ENCODE measurements at regions of chr9 and their contacts with region 1.

Region 1: GRCh38 chr9:38362852-38363593 is 29.5 kb upstream of the ALDH1B1 start:
- DNase-seq: peak; percentile 35 to 66
- H3K4me3 ChIP-seq: peak overlapping the region; percentile 10 to 21
- H3K27ac ChIP-seq: peak overlapping the region; percentile 41 to 55
- H3K4me1 ChIP-seq: peaks cover 0 to 9% (median 3%) of the 10 kb centered on the region in 4 donors
- H3K27me3 ChIP-seq: no peaks in the 10 kb centered on the region
- CTCF ChIP-seq: peak; percentile 59 to 60

Region 2: DNA sequence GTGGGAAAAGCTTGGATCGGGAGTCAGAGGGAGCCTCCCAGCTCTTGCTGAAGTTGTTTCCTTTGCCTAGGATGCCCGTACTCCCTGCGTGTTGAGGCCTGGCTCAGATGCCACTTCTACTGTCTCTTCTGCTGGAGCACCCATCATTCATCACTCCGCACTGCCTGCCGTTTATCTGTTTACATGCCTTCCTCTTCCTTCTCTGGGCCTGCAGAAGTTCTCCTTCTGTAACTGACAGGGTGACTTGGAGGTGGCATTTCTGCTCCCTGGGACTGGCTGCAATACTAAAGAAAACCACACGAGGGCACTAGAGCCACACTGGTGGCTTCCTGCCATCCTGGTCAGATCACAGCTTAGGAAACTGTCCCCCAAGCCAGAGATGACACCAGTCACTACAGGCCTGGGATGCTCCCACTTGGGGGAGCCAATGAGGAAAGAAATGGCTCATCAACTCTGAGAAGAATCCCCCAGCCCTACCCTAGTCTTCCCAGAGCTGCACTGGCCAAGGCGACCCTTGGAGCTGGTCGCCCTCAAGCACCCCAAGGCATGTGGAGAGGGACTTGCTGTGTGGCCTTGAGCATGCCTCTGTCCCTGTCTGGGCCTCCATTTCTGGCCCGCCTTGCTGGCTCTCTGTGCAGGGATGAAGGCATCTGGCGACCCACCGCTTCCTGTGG is 449.4 kb before region 1 on chr9:
- intact Hi-C with region 1: loop called (anchors 2 kb)
- DNase-seq: peak; percentile 75 to 88
- H3K4me3 ChIP-seq: no peak overlapping the region
- H3K27ac ChIP-seq: no peak overlapping the region
- H3K4me1 ChIP-seq: no peaks in the 10 kb centered on the region
- H3K27me3 ChIP-seq: no peaks in the 10 kb centered on the region
- CTCF ChIP-seq: peak; percentile 95 to 98

Region 3: DNA sequence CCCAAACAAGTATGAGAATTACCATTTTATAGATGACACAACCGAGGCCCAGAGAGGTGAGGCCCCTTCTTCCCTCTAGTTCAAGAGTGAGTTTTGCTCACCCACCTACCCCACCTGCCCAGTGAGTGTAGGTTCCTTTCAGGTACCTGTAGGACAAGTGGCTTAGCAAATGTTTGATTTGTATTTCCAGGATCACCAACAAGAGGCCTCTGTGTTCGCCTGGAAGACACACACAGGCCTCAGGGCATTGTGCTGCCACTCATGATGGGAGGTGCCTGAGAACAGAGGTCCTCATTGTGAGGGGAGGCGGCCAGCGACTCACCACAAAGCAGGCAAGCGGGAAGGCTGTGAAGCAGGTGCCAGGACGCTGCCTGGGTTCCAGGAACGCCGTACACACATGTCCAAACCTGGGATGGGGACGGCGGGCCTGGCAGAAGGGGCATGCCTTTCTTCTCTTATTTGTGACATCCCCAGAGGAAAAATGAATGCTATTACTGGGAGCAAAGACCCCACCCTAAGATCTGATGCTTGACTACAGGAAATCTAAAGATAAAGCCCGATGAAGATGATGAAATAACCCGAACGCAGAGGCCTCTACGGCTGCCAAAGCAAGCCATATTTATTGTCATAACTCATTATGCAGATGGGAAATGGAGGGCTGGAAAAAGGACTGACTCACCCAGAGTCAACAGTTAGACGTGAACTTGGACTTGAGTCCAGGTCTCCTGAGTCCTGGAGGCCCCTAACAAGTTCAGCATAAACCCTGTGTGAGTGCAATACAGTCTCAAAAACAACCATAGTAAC is 398.9 kb before region 1 on chr9:
- intact Hi-C with region 1: no loop called
- DNase-seq: peak; percentile 58 to 78
- H3K4me3 ChIP-seq: no peak overlapping the region
- H3K27ac ChIP-seq: peak overlapping the region; percentile 65 to 71
- H3K4me1 ChIP-seq: peaks cover 4 to 55% (median 30%) of the 10 kb centered on the region in 4 donors
- H3K27me3 ChIP-seq: no peaks in the 10 kb centered on the region
- CTCF ChIP-seq: no peak

Region 4: GRCh38 chr9:38017149-38017884 is 345.7 kb before region 1 on chr9:
- intact Hi-C with region 1: loop called (anchors 10 kb)
- DNase-seq: peak; percentile 39 to 83
- H3K4me3 ChIP-seq: peak overlapping the region in 1 of 2 donors; percentile 27
- H3K27ac ChIP-seq: peak overlapping the region; percentile 34 to 37
- H3K4me1 ChIP-seq: peaks cover 0 to 54% (median 45%) of the 10 kb centered on the region in 4 donors
- H3K27me3 ChIP-seq: no peaks in the 10 kb centered on the region
- CTCF ChIP-seq: peak; percentile 69 to 78

Region 5: GRCh38 chr9:38088006-38088925 is 274.8 kb before region 1 on chr9:
- intact Hi-C with region 1: loop called (anchors 5 kb)
- DNase-seq: peak; percentile 70 to 86
- H3K4me3 ChIP-seq: no peak overlapping the region
- H3K27ac ChIP-seq: no peak overlapping the region
- H3K4me1 ChIP-seq: peaks cover 0 to 8% (median 2%) of the 10 kb centered on the region in 4 donors
- H3K27me3 ChIP-seq: no peaks in the 10 kb centered on the region
- CTCF ChIP-seq: peak; percentile 89 to 96

Region 6: DNA sequence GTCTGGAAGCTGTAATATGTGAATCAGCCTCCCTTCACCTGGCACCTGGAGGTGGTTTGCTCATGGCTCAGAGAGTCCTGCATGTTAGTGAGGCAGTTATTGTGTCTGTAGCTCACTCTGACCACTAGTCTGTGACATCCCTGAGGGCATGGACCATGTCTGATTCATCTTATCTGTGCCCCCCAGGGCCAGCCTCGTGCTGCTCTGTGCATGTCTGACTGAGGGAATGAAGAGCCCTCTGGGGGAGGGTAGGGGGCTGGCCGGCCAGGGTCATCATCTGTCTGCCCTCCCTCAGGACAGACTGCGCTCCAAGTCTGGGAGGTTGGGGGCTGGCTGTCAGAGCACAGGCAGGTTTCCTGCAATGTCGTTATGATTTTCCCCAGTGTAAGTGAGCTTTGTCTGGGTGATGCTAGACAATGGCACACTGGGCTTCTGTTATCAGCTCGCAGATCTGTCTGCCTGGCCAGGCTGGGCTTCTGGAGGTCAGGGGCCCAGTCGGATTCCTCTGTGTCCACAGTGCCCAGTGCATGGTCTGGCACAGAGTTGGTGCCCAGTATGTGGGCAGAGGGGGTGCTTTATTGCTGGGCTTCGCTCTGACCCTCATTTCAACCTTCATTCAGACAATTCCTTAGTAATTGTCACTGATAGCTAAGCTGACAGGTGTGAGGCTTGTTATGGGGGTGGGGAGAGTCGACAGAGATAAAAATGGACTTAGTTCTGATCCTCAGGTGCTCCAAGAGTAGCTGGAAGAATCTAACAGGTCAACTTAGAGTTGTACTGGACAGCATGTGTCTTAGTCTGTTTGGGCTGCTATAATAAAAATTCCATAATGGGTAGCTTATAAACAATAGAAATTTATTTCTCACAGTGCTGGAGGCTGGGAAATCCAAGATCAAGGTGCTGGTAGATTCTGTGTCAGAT is 208.3 kb before region 1 on chr9:
- intact Hi-C with region 1: loop called (anchors 5 kb)
- DNase-seq: no peak
- H3K4me3 ChIP-seq: no peak overlapping the region
- H3K27ac ChIP-seq: no peak overlapping the region
- H3K4me1 ChIP-seq: no peaks in the 10 kb centered on the region
- H3K27me3 ChIP-seq: peaks cover 0 to 10% of the 10 kb centered on the region in 2 donors
- CTCF ChIP-seq: no peak

Region 7: DNA sequence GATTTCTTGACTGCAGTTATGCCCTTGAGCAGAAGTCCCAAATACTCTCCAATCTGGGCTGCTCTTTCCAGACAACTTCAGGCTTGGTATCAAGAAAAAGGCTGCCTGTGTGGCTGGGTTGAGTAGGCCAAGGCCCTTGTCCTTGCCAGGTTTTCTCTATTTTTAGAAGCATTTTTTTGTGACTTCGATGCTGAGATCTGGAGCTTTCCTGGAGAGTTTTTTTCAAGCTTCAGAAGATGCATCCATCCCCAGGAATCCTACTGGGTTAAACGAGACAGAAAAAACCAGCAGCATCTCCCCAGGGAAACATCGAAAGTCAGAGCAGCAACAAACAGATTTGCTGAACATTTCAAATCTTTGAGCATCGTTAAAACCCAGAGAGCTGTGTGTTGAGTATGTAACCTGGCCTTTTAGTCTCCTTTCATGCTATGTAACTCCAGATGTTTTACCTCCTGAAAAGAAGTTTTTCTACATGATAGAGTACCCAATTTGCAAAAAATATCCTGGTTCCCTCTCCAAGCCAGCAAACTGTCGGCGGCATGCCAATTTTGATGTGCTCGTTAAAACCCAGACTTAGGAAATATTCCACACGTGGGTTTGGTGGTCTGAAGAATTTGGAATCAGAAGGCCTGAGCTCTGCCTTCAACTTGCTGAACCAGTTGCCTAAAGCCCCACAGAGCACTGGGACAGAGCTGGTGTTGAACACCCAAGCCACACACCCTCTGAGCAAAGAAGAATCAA is 68.6 kb before region 1 on chr9:
- intact Hi-C with region 1: loop called (anchors 10 kb)
- DNase-seq: peak in 1 of 2 donors; percentile 31
- H3K4me3 ChIP-seq: no peak overlapping the region
- H3K27ac ChIP-seq: peak overlapping the region; percentile 32 to 51
- H3K4me1 ChIP-seq: peaks cover 0 to 24% (median 16%) of the 10 kb centered on the region in 4 donors
- H3K27me3 ChIP-seq: no peaks in the 10 kb centered on the region
- CTCF ChIP-seq: no peak

Measured in tibial artery (tissue), 4 donors.